ENCODE measurements at regions of chr12 and their contacts with region 1.

Region 1: DNA sequence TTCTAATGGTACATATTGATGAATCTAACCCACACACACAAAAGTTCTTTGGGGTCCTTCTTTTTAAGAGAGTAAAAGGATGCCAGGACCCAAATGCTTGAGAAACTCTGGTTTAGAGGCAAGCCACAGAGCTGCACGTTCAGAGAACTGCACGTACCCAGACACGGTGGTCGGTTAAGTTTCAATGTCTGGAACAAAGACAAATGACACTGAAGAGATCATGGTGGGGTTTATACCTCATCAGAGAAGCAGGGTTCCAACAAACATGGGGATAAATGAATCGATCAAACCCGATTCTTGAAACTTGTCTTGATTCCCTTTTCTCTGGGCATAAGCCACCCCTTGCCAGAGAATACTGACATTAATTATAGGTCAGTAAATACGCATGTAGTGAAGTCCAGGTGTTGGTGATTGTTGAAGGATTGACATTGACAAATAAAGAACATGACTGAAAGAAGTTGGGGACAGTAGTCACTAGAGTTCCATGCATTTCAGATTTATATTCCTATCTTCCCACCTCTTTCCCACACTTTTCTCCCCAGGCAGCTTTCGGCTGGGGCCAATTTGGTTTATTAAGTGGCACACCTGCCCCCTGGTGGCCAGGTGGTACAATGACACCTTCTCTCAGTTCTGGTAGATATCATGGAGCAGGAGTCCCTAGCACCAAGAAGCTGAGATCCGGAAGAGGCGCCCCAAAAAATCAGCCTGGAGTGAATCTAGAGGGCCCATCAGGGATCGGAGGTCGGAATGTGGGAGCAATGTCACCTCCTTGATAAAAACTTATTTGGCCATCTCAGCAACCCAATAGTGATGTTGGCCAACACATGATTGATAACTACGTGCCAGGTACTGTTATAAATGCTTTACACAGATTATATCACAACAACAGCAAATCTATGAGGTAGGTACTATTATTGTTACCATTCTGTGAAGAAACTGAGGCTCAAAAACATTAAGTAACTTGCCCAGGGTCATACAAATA is 17.8 kb upstream of the HDAC7 start:
- DNase-seq: peak; percentile 52 to 77 (median 63)
- H3K4me3 ChIP-seq: no peak overlapping the region
- H3K4me3 Mint-ChIP-seq: no peak overlapping the region
- H3K27ac ChIP-seq: no peak overlapping the region
- H3K27ac Mint-ChIP-seq: peak overlapping the region in 4 of 8 donors; percentile 2 to 16 (median 3)
- H3K4me1 ChIP-seq: peaks cover 37% of the 10 kb centered on the region
- H3K4me1 Mint-ChIP-seq: peaks cover 34 to 58% (median 39%) of the 10 kb centered on the region in 3 donors
- H3K27me3 ChIP-seq: no peaks in the 10 kb centered on the region
- H3K27me3 Mint-ChIP-seq: peaks cover 0 to 3% of the 10 kb centered on the region in 2 donors

Region 2: GRCh38 chr12:47742253-47742825 is 95.1 kb before region 1 on chr12:
- CTCF ChIA-PET with region 1: interaction called, 223 read pairs
- POLR2A ChIA-PET with region 1: no interaction called
- DNase-seq: peak; percentile 49 to 82 (median 61)
- H3K4me3 ChIP-seq: no peak overlapping the region
- H3K4me3 Mint-ChIP-seq: peak overlapping the region in 2 of 7 donors; percentile 3 to 13
- H3K27ac ChIP-seq: no peak overlapping the region
- H3K27ac Mint-ChIP-seq: peak overlapping the region in 1 of 8 donors; percentile 29
- H3K4me1 ChIP-seq: peaks cover 21% of the 10 kb centered on the region
- H3K4me1 Mint-ChIP-seq: peaks cover 19 to 37% (median 25%) of the 10 kb centered on the region in 3 donors
- H3K27me3 ChIP-seq: no peaks in the 10 kb centered on the region
- H3K27me3 Mint-ChIP-seq: peaks cover 5 to 23% of the 10 kb centered on the region in 2 donors

Region 3: GRCh38 chr12:47767216-47767724 is 70.2 kb before region 1 on chr12:
- CTCF ChIA-PET with region 1: interaction called, 25 read pairs
- POLR2A ChIA-PET with region 1: no interaction called
- DNase-seq: peak; percentile 53 to 81 (median 59)
- H3K4me3 ChIP-seq: no peak overlapping the region
- H3K4me3 Mint-ChIP-seq: peak overlapping the region in 1 of 7 donors; percentile 73
- H3K27ac ChIP-seq: no peak overlapping the region
- H3K27ac Mint-ChIP-seq: peak overlapping the region in 4 of 8 donors; percentile 16 to 62 (median 18)
- H3K4me1 ChIP-seq: peaks cover 11% of the 10 kb centered on the region
- H3K4me1 Mint-ChIP-seq: peaks cover 19 to 22% (median 20%) of the 10 kb centered on the region in 3 donors
- H3K27me3 ChIP-seq: no peaks in the 10 kb centered on the region
- H3K27me3 Mint-ChIP-seq: peaks cover 0 to under 1% of the 10 kb centered on the region in 2 donors

Region 4: DNA sequence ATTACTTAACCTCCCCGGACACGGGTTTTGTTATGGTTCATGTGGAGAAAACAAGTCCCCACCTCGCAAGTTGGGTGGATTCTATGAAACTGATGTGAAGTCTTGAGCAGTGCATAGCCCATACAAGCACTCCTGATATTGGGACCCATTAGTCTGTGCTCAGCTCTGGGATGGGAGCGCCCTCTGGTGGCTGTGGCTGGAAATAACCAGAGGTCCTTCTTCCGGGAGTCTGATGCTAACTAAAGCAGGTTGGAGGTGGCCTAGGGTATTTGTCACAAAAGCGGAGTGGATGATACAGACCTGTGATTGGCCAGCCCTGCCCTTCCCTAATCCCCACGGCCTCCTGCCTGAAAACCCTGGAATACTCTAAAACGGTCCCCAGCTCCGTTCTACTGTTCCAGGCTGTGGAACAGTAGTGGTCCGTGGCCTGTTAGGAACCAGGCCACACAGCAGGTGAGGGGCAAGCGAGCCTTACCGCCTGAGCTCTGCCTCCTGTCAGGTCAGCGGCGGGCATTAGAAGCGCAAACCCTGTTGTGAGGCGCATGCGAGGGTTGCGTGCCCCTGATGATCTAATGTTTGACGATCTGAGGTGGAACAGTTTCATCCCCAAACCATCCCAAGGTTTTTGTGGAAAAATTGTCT is 58.1 kb before region 1 on chr12:
- CTCF ChIA-PET with region 1: interaction called, 147 read pairs
- POLR2A ChIA-PET with region 1: interaction called, 3 read pairs
- DNase-seq: peak; percentile 77 to 92 (median 85)
- H3K4me3 ChIP-seq: no peak overlapping the region
- H3K4me3 Mint-ChIP-seq: peak overlapping the region in 1 of 7 donors; percentile 75
- H3K27ac ChIP-seq: no peak overlapping the region
- H3K27ac Mint-ChIP-seq: peak overlapping the region in 5 of 8 donors; percentile 8 to 66 (median 39)
- H3K4me1 ChIP-seq: peaks cover 8% of the 10 kb centered on the region
- H3K4me1 Mint-ChIP-seq: peaks cover 7 to 15% (median 9%) of the 10 kb centered on the region in 3 donors
- H3K27me3 ChIP-seq: no peaks in the 10 kb centered on the region
- H3K27me3 Mint-ChIP-seq: no peaks in the 10 kb centered on the region

Region 5: GRCh38 chr12:47812797-47813510 is 24.5 kb before region 1 on chr12:
- CTCF ChIA-PET with region 1: interaction called, 452 read pairs
- POLR2A ChIA-PET with region 1: interaction called, 13 read pairs
- DNase-seq: peak; percentile 79 to 93 (median 82)
- H3K4me3 ChIP-seq: peak overlapping the region; percentile 72
- H3K4me3 Mint-ChIP-seq: peak overlapping the region; percentile 84 to 94 (median 90)
- H3K27ac ChIP-seq: peak overlapping the region; percentile 86
- H3K27ac Mint-ChIP-seq: peak overlapping the region; percentile 93 to 99 (median 98)
- H3K4me1 ChIP-seq: peaks cover 94% of the 10 kb centered on the region
- H3K4me1 Mint-ChIP-seq: peaks cover 85 to 99% (median 98%) of the 10 kb centered on the region in 3 donors
- H3K27me3 ChIP-seq: no peaks in the 10 kb centered on the region
- H3K27me3 Mint-ChIP-seq: peaks cover 0 to 4% of the 10 kb centered on the region in 2 donors

Region 6: GRCh38 chr12:47870175-47870781 is 32.8 kb after region 1 on chr12:
- CTCF ChIA-PET with region 1: interaction called, 10 read pairs
- POLR2A ChIA-PET with region 1: no interaction called
- DNase-seq: no peak
- H3K4me3 ChIP-seq: no peak overlapping the region
- H3K4me3 Mint-ChIP-seq: no peak overlapping the region
- H3K27ac ChIP-seq: no peak overlapping the region
- H3K27ac Mint-ChIP-seq: peak overlapping the region in 1 of 8 donors; percentile 27
- H3K4me1 ChIP-seq: no peaks in the 10 kb centered on the region
- H3K4me1 Mint-ChIP-seq: no peaks in the 10 kb centered on the region
- H3K27me3 ChIP-seq: no peaks in the 10 kb centered on the region
- H3K27me3 Mint-ChIP-seq: no peaks in the 10 kb centered on the region

Measured in CD8-positive, alpha-beta memory T cell (primary cell).